ENCODE measurements at regions of chr13 and their contacts with region 1.

Region 1: DNA sequence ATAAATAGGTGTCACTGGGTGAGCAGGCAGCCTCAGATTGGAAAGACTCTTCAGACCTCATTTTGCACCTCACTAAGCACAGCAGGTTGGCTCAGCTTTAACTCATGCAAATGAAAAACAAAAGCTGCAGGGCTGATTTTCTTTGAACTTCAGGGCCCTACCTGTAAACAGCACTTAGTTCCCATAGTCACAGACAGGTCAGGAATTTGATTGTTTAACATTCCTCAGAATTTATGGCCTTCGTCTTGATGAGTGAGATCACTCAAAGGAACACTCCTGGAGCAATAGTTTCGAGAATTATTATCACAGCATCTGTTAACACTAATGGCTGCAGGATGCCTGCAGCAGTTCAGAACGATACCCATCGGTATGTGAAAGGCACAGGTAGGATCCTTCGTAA is 718.4 kb downstream of the EFNB2 start:
- DNase-seq: peak in 1 of 2 experiments; percentile 95
- H3K4me3 ChIP-seq: no peak overlapping the region
- H3K27ac ChIP-seq: no peak overlapping the region; the same call in 1 of the 2 replicates
- H3K4me1 ChIP-seq: peaks cover 40% of the 10 kb centered on the region
- H3K27me3 ChIP-seq: no peaks in the 10 kb centered on the region
- CTCF ChIP-seq: no peak

Region 2: DNA sequence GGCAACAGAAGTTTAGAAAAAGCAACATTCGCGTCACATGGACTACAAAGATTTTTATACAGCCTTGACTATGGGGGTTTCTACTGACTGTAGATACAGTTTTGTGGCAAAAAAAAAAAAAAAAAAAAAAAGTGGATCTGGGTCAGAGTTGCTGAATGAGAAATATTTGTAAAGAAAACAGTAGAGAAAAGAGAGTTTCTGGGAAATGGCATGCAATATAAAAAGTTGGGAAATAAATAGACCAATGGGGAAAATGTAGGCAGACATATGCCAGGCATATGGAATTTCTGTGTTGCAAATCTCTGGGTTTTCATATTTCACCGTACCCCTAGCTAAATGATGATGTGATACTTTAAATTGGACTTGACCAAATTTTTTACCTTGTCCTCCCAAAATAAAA is 403.2 kb after region 1 on chr13:
- CTCF ChIA-PET with region 1: interaction called, 12 read pairs
- POLR2A ChIA-PET with region 1: no interaction called
- intact Hi-C with region 1: no loop called
- DNase-seq: no peak
- H3K4me3 ChIP-seq: no peak overlapping the region
- H3K27ac ChIP-seq: no peak overlapping the region
- H3K4me1 ChIP-seq: 0 out of 2 replicates have a peak, but pooled peaks cover 6% of the 10 kb centered on the region
- H3K27me3 ChIP-seq: no peaks in the 10 kb centered on the region
- CTCF ChIP-seq: no peak